ENCODE measurements at regions of chr11 and their contacts with region 1.

Region 1: GRCh38 chr11:128522055-128522942 is 65.1 kb downstream of the ETS1 start:
- DNase-seq: peak; percentile 94
- ATAC-seq: peak; percentile 78
- H3K4me3 Mint-ChIP-seq: peak overlapping the region; percentile 96
- H3K27ac Mint-ChIP-seq: peak overlapping the region; percentile 92
- H3K4me1 Mint-ChIP-seq: peaks cover 44% of the 10 kb centered on the region
- H3K27me3 Mint-ChIP-seq: no peaks in the 10 kb centered on the region

Region 2: GRCh38 chr11:128302425-128303186 is 219.7 kb before region 1 on chr11:
- CTCF ChIA-PET with region 1: interaction called, 10 read pairs
- POLR2A ChIA-PET with region 1: interaction called, 184 read pairs
- DNase-seq: peak; percentile 90
- ATAC-seq: peak; percentile 90
- H3K4me3 Mint-ChIP-seq: peak overlapping the region; percentile 89
- H3K27ac Mint-ChIP-seq: peak overlapping the region; percentile 96
- H3K4me1 Mint-ChIP-seq: peaks cover 79% of the 10 kb centered on the region
- H3K27me3 Mint-ChIP-seq: no peaks in the 10 kb centered on the region

Region 3: GRCh38 chr11:128472128-128473089 is 49.9 kb before region 1 on chr11:
- CTCF ChIA-PET with region 1: interaction called, 53 read pairs
- POLR2A ChIA-PET with region 1: interaction called, 230 read pairs
- DNase-seq: peak; percentile 69
- ATAC-seq: peak; percentile 55
- H3K4me3 Mint-ChIP-seq: peak overlapping the region; percentile 56
- H3K27ac Mint-ChIP-seq: peak overlapping the region; percentile 85
- H3K4me1 Mint-ChIP-seq: peaks cover 98% of the 10 kb centered on the region
- H3K27me3 Mint-ChIP-seq: no peaks in the 10 kb centered on the region

Region 4: DNA sequence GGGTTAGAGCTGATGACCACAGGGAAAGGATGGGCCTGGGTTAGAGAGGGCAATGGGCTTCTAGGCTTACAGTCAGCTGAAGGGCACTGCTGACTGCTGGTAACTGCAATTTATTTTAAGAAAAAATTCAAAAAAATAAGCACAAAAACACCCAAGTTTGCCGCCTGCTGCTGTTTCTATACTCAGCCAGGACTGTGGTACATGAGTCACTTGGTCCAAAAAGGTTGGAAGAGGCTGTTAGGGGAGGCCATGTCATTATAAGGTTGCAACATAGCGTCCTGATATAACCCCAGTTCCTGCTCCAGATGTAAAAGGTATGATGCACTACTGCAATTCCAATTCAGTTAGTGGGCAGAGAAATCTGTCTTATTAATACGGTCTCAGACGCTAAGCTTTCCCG is 33.8 kb before region 1 on chr11:
- CTCF ChIA-PET with region 1: interaction called, 10 read pairs
- POLR2A ChIA-PET with region 1: interaction called, 35 read pairs
- DNase-seq: no peak
- ATAC-seq: peak; percentile 18
- H3K4me3 Mint-ChIP-seq: peak overlapping the region; percentile 26
- H3K27ac Mint-ChIP-seq: peak overlapping the region; percentile 87
- H3K4me1 Mint-ChIP-seq: peaks cover 95% of the 10 kb centered on the region
- H3K27me3 Mint-ChIP-seq: no peaks in the 10 kb centered on the region

Region 5: DNA sequence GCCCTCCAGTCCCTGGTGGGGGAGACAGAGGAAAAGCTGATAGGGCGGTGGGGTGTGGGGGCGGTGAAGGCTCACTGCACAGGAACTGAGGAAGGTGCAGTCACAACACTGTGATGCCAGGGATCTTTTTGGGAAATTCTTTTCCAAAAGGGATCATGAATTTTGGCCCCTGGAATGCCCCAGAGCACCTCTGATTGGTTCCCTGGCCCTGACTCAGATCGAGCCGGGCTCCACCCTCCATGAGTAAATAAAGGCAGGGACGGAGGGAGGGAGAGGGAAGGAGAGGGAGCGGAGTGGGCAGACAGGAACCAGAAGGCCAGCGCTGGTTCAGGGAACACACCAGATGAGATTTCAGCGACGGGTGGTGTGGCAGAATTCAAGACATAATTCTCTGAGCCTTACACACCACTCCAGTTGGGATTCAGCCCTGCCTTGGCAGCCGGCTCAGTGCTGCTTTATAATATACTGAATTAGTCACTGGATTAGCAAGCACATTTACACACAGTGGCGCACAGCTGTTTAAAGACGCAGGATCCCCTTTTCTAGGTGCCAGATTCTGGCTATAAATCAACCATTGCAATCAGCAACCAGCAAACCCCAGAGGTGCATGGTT is 15.2 kb before region 1 on chr11:
- CTCF ChIA-PET with region 1: interaction called, 77 read pairs
- POLR2A ChIA-PET with region 1: interaction called, 652 read pairs
- DNase-seq: no peak
- ATAC-seq: peak; percentile 7
- H3K4me3 Mint-ChIP-seq: peak overlapping the region; percentile 78
- H3K27ac Mint-ChIP-seq: peak overlapping the region; percentile 96
- H3K4me1 Mint-ChIP-seq: peaks cover 97% of the 10 kb centered on the region
- H3K27me3 Mint-ChIP-seq: no peaks in the 10 kb centered on the region

Region 6: GRCh38 chr11:128552783-128553661 is 30.7 kb after region 1 on chr11:
- CTCF ChIA-PET with region 1: interaction called, 29 read pairs
- POLR2A ChIA-PET with region 1: interaction called, 71 read pairs
- DNase-seq: no peak
- ATAC-seq: no peak
- H3K4me3 Mint-ChIP-seq: no peak overlapping the region
- H3K27ac Mint-ChIP-seq: peak overlapping the region; percentile 62
- H3K4me1 Mint-ChIP-seq: peaks cover 59% of the 10 kb centered on the region
- H3K27me3 Mint-ChIP-seq: no peaks in the 10 kb centered on the region

Region 7: GRCh38 chr11:128624269-128625175 is 102.2 kb after region 1 on chr11:
- CTCF ChIA-PET with region 1: interaction called, 247 read pairs
- POLR2A ChIA-PET with region 1: interaction called, 565 read pairs
- DNase-seq: peak; percentile 73
- ATAC-seq: peak; percentile 52
- H3K4me3 Mint-ChIP-seq: peak overlapping the region; percentile 69
- H3K27ac Mint-ChIP-seq: peak overlapping the region; percentile 97
- H3K4me1 Mint-ChIP-seq: peaks cover 88% of the 10 kb centered on the region
- H3K27me3 Mint-ChIP-seq: no peaks in the 10 kb centered on the region